ENCODE measurements at regions of chr7 and their contacts with region 1.

Region 1: GRCh38 chr7:37201003-37201875 is 247.4 kb downstream of the ELMO1 start:
- DNase-seq: peak; percentile 80 to 84
- H3K4me3 ChIP-seq: no peak overlapping the region
- H3K4me3 Mint-ChIP-seq: no peak overlapping the region
- H3K27ac Mint-ChIP-seq: no peak overlapping the region
- H3K4me1 ChIP-seq: no peaks in the 10 kb centered on the region; the same call in 1 of the 2 replicates
- H3K4me1 Mint-ChIP-seq: no peaks in the 10 kb centered on the region
- H3K27me3 ChIP-seq: no peaks in the 10 kb centered on the region
- H3K27me3 Mint-ChIP-seq: no peaks in the 10 kb centered on the region
- CTCF ChIP-seq: peak; percentile 79 to 85

Region 2: GRCh38 chr7:36440880-36441279 is 760.4 kb before region 1 on chr7:
- CTCF ChIA-PET with region 1: interaction called, 14 read pairs
- POLR2A ChIA-PET with region 1: no interaction called
- intact Hi-C with region 1: loop called (anchors 1 kb)
- DNase-seq: peak in 1 of 2 experiments; percentile 24
- H3K4me3 ChIP-seq: no peak overlapping the region
- H3K4me3 Mint-ChIP-seq: no peak overlapping the region
- H3K27ac Mint-ChIP-seq: no peak overlapping the region
- H3K4me1 ChIP-seq: peaks cover 13% of the 10 kb centered on the region
- H3K4me1 Mint-ChIP-seq: no peaks in the 10 kb centered on the region
- H3K27me3 ChIP-seq: no peaks in the 10 kb centered on the region
- H3K27me3 Mint-ChIP-seq: no peaks in the 10 kb centered on the region
- CTCF ChIP-seq: peak; percentile 36 to 42

Region 3: DNA sequence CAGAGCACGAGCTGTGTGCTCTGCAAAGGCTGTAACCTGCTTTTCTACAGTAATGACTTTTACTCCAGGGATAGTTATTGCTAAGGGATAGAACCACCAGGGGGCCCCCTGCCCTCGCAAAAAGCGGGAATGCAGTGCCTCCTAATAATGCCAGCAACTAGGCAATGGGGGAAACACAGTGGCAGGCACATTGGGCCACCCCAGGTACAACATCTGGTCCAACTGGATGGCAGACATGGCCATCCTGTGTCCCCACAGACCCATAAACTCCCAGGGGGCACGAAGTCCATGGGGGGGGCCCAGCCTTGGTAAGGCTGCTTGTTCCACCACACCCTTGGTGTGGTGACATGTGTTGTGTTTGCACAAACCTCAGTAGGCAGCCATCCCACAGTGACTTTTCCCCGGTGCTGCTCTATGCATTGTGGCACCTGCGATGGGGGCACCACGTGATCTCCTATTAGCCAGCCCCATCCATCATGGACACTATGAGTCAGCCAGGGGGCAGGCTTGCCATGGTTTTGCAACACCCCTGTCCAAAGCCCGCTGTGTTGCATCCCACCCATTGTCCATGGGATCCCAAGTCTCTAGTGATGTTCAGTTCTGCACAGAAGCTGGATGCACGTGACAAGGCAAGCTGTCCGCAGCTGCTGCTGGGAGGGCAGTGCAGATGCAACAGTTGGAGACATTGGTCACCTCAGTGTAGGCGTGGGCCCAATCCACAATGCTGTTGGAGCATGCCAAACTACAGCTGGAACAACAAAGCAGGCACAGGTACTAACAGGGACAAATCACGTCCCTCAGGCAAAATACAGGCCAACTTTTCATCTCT is 727.6 kb before region 1 on chr7:
- CTCF ChIA-PET with region 1: interaction called, 4 read pairs
- POLR2A ChIA-PET with region 1: no interaction called
- intact Hi-C with region 1: loop called (anchors 1 kb)
- DNase-seq: peak in 1 of 2 experiments; percentile 57
- H3K4me3 ChIP-seq: no peak overlapping the region
- H3K4me3 Mint-ChIP-seq: no peak overlapping the region
- H3K27ac Mint-ChIP-seq: no peak overlapping the region
- H3K4me1 ChIP-seq: no peaks in the 10 kb centered on the region
- H3K4me1 Mint-ChIP-seq: no peaks in the 10 kb centered on the region
- H3K27me3 ChIP-seq: no peaks in the 10 kb centered on the region
- H3K27me3 Mint-ChIP-seq: no peaks in the 10 kb centered on the region
- CTCF ChIP-seq: peak; percentile 46 to 52

Region 4: GRCh38 chr7:36487756-36488336 is 713.4 kb before region 1 on chr7:
- CTCF ChIA-PET with region 1: interaction called, 22 read pairs
- POLR2A ChIA-PET with region 1: no interaction called
- intact Hi-C with region 1: loop called (anchors 1 kb)
- DNase-seq: peak in 1 of 2 experiments; percentile 55
- H3K4me3 ChIP-seq: no peak overlapping the region
- H3K4me3 Mint-ChIP-seq: no peak overlapping the region
- H3K27ac Mint-ChIP-seq: no peak overlapping the region
- H3K4me1 ChIP-seq: peaks cover 12% of the 10 kb centered on the region; the same call in 1 of the 2 replicates
- H3K4me1 Mint-ChIP-seq: no peaks in the 10 kb centered on the region
- H3K27me3 ChIP-seq: no peaks in the 10 kb centered on the region
- H3K27me3 Mint-ChIP-seq: no peaks in the 10 kb centered on the region
- CTCF ChIP-seq: peak; percentile 74 to 78

Region 5: DNA sequence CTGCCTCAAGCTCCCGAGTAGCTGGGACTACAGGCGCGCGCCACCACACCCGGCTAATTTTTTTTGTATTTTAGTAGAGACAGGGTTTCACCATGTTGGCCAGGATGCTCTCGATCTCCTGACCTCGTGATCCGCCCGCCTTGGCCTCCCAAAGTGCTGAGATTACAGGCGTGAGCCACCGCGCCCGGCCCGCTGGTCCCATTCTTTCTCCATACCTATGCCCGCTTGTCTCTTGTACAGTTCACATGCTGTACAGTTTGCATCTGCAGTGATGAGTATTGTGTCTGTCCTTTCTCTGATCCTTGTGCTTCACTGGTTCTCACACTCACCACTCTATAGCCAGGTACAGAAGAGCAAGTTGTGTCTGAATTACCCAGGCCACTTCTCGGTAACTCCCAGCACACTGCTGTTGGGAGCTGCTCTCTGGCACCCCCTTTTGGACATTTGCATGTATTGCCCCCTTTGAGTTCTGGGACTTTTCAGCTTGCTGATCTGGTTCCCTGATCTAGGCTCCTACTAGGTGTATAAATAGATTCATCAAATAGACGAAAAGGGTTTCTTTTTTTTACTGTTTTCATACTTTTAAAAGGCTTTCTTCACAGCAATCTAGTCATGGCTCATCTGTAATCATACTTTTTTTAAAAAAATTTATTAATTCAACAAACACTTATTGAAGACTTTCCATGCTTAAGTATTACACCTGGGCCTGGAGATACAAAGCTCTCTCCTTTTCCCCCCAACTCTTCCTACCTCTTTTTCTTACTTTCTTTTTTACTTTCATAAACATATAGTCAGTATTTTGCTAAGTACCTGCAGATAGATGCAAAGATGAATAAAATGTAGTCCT is 530.4 kb before region 1 on chr7:
- CTCF ChIA-PET with region 1: interaction called, 8 read pairs
- POLR2A ChIA-PET with region 1: no interaction called
- intact Hi-C with region 1: loop called (anchors 2 kb)
- DNase-seq: peak; percentile 57 to 74
- H3K4me3 ChIP-seq: no peak overlapping the region
- H3K4me3 Mint-ChIP-seq: no peak overlapping the region
- H3K27ac Mint-ChIP-seq: no peak overlapping the region
- H3K4me1 ChIP-seq: no peaks in the 10 kb centered on the region
- H3K4me1 Mint-ChIP-seq: no peaks in the 10 kb centered on the region
- H3K27me3 ChIP-seq: no peaks in the 10 kb centered on the region
- H3K27me3 Mint-ChIP-seq: no peaks in the 10 kb centered on the region
- CTCF ChIP-seq: peak; percentile 78 to 85

Region 6: DNA sequence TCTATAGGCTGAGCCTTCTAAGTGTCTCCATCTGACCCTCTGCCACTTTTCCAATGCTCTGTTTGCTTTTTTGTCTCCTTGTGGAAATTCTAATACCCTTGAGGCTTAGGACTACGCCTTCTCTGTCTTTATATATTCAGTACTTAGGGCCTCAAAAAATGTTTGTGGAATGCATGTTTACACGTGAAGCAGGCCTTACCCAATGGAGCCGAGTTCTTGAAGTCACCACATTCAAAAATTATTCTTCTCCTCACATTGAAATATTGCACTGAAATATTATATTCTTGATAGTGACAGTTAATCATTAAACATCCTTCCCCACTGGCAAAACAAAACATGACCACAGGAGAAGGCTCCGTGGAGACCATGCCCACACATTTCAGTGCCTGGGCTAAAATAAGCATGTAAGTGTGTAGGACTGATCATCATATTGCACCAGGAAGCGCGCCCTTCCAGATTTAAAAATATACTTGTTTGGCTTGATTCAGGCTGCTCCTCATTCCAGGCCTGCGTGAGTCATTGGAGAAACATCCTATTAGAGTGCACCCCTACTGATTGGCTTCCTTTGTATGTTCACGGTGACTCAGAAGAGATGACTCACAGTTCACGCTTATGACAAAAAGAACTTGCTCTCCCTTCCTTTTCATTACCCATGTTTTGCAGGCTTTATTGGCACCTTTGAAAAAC is 169.5 kb before region 1 on chr7:
- CTCF ChIA-PET with region 1: no interaction called
- POLR2A ChIA-PET with region 1: no interaction called
- intact Hi-C with region 1: loop called (anchors 1 kb)
- DNase-seq: peak; percentile 83 to 86
- H3K4me3 ChIP-seq: no peak overlapping the region
- H3K4me3 Mint-ChIP-seq: peak overlapping the region; percentile 27
- H3K27ac Mint-ChIP-seq: peak overlapping the region; percentile 87
- H3K4me1 ChIP-seq: peaks cover 23% of the 10 kb centered on the region
- H3K4me1 Mint-ChIP-seq: peaks cover 24% of the 10 kb centered on the region
- H3K27me3 ChIP-seq: no peaks in the 10 kb centered on the region
- H3K27me3 Mint-ChIP-seq: no peaks in the 10 kb centered on the region
- CTCF ChIP-seq: no peak